ENCODE measurements at regions of chr16 and their contacts with region 1.

Region 1: DNA sequence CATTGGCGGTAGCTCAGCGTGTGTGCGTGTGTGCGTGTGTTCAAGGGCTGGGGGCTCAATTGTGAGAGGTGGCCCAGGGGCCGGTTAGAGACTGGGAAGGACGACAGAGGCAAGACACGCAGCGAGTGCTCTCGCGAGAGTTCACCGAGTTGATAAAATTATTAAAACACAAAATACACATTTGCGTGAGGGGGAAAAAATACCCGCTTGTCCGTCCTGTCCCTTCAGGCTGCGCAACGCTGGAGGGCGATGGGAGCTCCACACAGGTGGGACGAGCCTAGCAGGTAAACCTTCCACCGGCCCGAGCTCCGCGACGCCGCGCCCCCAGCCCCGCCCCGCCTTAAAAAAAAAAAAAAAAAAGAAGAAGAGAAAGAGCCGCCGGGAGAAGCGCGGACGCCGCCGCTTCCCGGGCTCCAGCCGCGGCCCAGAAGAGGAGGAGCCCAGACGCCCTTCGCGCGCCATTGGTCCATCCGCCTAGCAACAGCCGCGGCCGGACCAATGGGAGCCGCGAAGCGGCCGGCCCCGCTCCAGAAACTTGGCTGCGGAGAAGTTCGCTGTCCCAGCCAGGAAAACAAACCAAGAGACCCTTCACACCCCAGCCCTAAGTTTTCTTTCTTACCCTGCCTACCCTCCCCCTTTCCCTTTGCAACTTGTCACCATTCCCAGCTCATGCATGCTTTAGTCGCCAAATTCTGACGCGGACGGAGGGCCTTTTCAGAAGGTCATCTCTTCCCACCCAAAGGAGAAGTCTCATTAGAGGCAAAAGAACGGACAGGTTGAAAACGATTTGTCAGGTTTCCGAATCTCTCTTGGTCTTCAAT is 169.9 kb upstream of the MAF start:
- DNase-seq: peak; percentile 93
- H3K4me3 Mint-ChIP-seq: peak overlapping the region; percentile 97
- H3K27ac Mint-ChIP-seq: peak overlapping the region; percentile 90
- H3K4me1 Mint-ChIP-seq: peaks cover 32% of the 10 kb centered on the region
- H3K27me3 Mint-ChIP-seq: peaks cover 26% of the 10 kb centered on the region

Region 2: GRCh38 chr16:79278506-79278905 is 491.9 kb before region 1 on chr16:
- intact Hi-C with region 1: loop called (anchors 10 kb)
- DNase-seq: peak; percentile 90
- H3K4me3 Mint-ChIP-seq: peak overlapping the region; percentile 74
- H3K27ac Mint-ChIP-seq: peak overlapping the region; percentile 85
- H3K4me1 Mint-ChIP-seq: peaks cover 62% of the 10 kb centered on the region
- H3K27me3 Mint-ChIP-seq: peaks cover 20% of the 10 kb centered on the region

Region 3: DNA sequence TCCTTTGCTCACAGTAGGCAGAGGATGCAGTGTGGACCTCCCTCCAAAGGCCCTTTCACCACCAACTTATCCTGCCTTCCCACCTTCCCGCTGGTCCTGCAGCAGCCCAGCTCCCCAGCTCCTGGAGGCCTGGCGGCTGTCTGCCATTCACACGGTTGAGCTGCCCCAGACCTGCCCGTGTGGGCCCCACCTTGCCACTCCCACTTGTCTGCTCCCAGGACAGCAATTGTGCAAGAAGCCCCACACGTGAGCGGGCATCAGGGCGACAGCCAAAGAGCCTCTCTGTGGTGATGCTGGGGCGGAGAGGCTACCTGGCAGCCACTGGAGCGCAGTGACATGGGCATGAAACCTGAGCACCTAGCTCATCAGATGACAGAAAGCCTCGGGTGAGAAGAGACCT is 78.7 kb after region 1 on chr16:
- intact Hi-C with region 1: no loop called
- DNase-seq: no peak
- H3K4me3 Mint-ChIP-seq: no peak overlapping the region
- H3K27ac Mint-ChIP-seq: no peak overlapping the region
- H3K4me1 Mint-ChIP-seq: peaks cover 21% of the 10 kb centered on the region
- H3K27me3 Mint-ChIP-seq: peaks cover 3% of the 10 kb centered on the region

Measured in activated CD4-positive, alpha-beta T cell treated with anti-CD3 and anti-CD28 coated beads, Interleukin-2, amount 10 ng/mL, durations not matched to agents 24 days and 14 days (primary cell).